K562 (cell line): ENCODE measurements at regions of chr1 and their contacts with region 1.

Region 1: DNA sequence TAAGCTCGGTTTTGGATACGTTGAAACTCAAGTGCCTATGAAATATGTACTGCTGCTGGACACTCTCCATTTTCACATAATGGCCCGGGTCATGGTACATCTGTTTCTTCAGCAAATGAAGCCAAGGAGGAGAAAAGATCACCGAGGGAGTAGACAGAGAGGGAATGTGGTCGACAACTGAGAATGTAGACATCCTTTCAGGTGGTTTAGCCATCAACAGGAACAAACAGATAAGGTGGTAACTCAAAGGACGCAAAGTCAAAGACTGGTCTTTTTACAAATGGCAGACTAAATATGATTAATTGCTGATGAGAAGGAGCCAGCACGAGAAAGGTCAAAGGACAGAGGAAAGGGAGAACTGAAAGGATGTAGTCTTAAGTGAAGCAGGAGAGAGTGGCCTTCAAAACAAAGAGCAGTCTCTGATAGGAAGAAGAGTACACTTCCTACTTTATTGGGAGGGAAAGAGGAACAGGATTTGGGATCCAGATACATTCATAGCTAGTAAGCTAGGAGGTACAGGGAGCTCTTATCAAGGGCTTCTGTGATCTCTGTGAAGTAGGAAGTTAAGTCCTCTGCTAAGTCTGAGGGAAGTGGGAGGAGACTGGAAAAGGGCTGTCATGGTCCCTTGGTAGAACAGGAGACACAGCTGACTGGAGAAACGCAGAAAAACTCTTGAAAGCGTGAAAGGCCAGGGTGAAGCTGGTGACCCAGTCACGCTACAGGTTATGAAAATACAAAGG is 28.3 kb downstream of the NUP133 start:
- DNase-seq: peak in 2 of 4 experiments; percentile 18 to 38
- ATAC-seq: peak; percentile 67
- H3K4me3 ChIP-seq: no peak overlapping the region
- H3K27ac ChIP-seq: no peak overlapping the region
- H3K4me1 ChIP-seq: peaks cover 0 to 8% of the 10 kb centered on the region in 2 experiments; a peak in 1 of 5 replicates
- H3K27me3 ChIP-seq: no peaks in the 10 kb centered on the region
- CTCF ChIP-seq: no peak
- EP300 ChIP-seq: no peak
- POLR2A ChIP-seq: no peak
- RAD21 ChIP-seq: no peak

Region 2: GRCh38 chr1:228684607-228685006 is 795.2 kb before region 1 on chr1:
- CTCF ChIA-PET with region 1: no interaction called
- POLR2A ChIA-PET with region 1: no interaction called
- in situ Hi-C with region 1: loop called (anchors 10 kb)
- intact Hi-C with region 1: no loop called
- DNase-seq: no peak
- ATAC-seq: no peak
- H3K4me3 ChIP-seq: no peak overlapping the region
- H3K27ac ChIP-seq: no peak overlapping the region
- H3K4me1 ChIP-seq: no peaks in the 10 kb centered on the region; a peak in 1 of 5 replicates
- H3K27me3 ChIP-seq: peaks cover 2 to 32% of the 10 kb centered on the region in 2 experiments; a peak in 3 of 5 replicates
- CTCF ChIP-seq: no peak
- EP300 ChIP-seq: no peak
- POLR2A ChIP-seq: no peak
- RAD21 ChIP-seq: no peak

Region 3: DNA sequence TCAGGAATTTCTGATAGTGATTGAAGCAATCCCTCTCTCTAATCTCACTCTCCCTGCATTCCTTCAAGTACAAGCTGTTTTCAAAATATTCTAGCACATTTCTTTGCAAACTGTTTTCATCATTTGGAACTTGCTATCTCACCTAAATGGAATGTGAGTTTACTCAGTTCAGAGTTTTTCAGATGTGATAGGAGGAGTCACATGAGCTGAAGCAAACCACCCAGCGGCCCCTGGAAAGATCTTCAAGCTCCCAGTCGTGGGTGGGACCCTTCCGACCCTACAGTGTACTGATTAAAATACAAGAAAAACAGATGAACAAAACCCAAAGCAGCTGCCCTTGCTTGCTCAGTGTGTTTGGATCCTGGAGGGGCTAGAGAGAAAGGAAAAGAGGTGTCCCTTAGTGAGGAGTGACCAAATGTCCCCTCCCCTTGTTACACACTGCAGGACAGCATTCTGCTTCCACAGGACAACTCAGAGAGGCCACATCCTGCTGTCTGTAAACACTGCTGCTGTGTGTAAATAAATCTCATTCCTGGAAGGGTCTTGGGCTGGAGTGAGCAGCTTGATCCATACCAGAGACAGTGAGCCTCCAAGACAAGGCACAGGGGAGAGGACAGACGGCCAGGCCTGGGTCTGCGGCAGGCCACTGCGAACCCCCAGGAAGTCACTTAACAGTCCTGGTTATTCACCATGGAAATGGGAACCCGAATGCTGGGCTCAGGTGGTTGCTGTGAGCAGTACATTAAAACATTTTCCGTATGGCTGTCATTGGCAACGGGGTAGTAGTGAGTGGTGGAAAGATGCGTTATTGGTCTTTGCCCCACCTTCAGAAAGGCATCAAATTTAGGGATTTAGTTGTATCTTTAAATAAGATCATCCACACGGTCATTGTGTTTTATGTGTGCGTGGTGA is 515.4 kb before region 1 on chr1:
- CTCF ChIA-PET with region 1: no interaction called
- POLR2A ChIA-PET with region 1: no interaction called
- in situ Hi-C with region 1: no loop called
- intact Hi-C with region 1: no loop called
- DNase-seq: peak in 1 of 4 experiments; percentile 3
- ATAC-seq: no peak
- H3K4me3 ChIP-seq: no peak overlapping the region
- H3K27ac ChIP-seq: no peak overlapping the region
- H3K4me1 ChIP-seq: no peaks in the 10 kb centered on the region
- H3K27me3 ChIP-seq: peaks cover 15 to 34% of the 10 kb centered on the region in 2 experiments; a peak in 4 of 5 replicates
- CTCF ChIP-seq: no peak
- EP300 ChIP-seq: no peak
- POLR2A ChIP-seq: no peak
- RAD21 ChIP-seq: no peak

Region 4: DNA sequence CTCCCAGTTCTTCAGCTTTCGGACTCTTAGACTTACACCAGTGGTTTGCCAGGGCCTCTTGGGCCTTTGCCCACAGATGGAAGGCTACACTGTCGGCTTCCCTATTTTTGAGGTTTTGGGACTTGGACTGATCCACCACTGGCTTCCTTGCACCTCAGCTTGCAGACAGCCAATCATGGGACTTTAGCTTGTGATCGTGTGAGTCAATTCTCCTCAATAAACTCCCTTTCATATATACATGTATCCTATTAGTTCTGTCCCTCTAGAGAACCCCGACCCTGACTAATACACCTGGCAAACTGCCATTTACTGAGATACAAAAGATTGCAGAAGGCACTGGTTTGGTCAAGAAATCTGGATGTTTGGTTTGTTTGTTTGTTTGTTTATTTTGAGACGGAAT is 215.3 kb before region 1 on chr1:
- CTCF ChIA-PET with region 1: interaction called, 50 read pairs
- POLR2A ChIA-PET with region 1: no interaction called
- in situ Hi-C with region 1: loop called (anchors 5 kb)
- intact Hi-C with region 1: no loop called
- DNase-seq: no peak
- ATAC-seq: no peak
- H3K4me3 ChIP-seq: no peak overlapping the region
- H3K27ac ChIP-seq: no peak overlapping the region
- H3K4me1 ChIP-seq: peaks cover 0 to 6% of the 10 kb centered on the region in 2 experiments; a peak in 1 of 5 replicates
- H3K27me3 ChIP-seq: no peaks in the 10 kb centered on the region; a peak in 1 of 5 replicates
- CTCF ChIP-seq: no peak
- EP300 ChIP-seq: no peak
- POLR2A ChIP-seq: no peak
- RAD21 ChIP-seq: no peak

Region 5: GRCh38 chr1:229420765-229421164 is 59.1 kb before region 1 on chr1:
- CTCF ChIA-PET with region 1: no interaction called
- POLR2A ChIA-PET with region 1: interaction called, 3 read pairs
- in situ Hi-C with region 1: no loop called
- intact Hi-C with region 1: loop called (anchors 5 kb)
- DNase-seq: peak in 3 of 4 experiments; percentile 47 to 49 (median 49)
- ATAC-seq: peak; percentile 96
- H3K4me3 ChIP-seq: no peak overlapping the region
- H3K27ac ChIP-seq: no peak overlapping the region
- H3K4me1 ChIP-seq: no peaks in the 10 kb centered on the region; a peak in 1 of 5 replicates
- H3K27me3 ChIP-seq: peaks cover 26 to 27% of the 10 kb centered on the region in 2 experiments
- CTCF ChIP-seq: peak; percentile 43 to 55 (median 52)
- EP300 ChIP-seq: no peak
- POLR2A ChIP-seq: no peak
- RAD21 ChIP-seq: peak in 1 of 2 experiments; percentile 59; a peak in 2 of 4 replicates

Region 6: GRCh38 chr1:229495782-229496181 is 16.0 kb after region 1 on chr1:
- CTCF ChIA-PET with region 1: no interaction called
- POLR2A ChIA-PET with region 1: interaction called, 10 read pairs
- in situ Hi-C with region 1: no loop called
- intact Hi-C with region 1: no loop called
- DNase-seq: no peak
- ATAC-seq: no peak
- H3K4me3 ChIP-seq: no peak overlapping the region
- H3K27ac ChIP-seq: no peak overlapping the region
- H3K4me1 ChIP-seq: no peaks in the 10 kb centered on the region
- H3K27me3 ChIP-seq: no peaks in the 10 kb centered on the region
- CTCF ChIP-seq: no peak
- EP300 ChIP-seq: no peak
- POLR2A ChIP-seq: no peak
- RAD21 ChIP-seq: no peak

Region 7: DNA sequence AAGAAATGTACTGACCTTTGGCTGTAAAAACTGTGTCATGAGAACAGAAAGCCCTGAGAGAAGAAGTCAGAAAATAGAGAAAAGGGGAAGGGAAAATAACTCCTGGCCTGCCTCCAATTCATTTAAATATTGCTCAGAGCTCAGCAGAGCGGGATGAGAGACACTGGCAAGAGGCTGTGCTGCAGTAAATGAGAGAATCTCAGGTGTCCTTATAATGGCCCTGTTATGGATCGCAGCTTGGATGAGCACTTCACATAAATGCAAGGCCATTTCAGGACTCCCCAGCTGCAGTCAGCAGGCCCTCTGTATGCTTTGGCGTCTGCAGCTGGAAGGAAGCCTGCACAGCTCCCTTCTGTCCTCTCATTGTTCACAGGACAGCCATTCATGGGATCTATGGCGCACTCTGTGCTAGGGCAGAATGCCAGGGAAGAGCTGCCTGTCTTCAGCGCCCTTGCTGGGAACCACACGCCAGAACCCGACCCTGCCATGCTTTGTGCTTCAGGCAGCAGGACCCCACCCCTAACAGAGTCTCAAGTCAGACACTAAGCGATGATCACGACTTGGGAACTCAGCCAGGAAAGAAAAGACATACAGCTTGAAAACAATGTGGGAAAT is 99.3 kb after region 1 on chr1:
- CTCF ChIA-PET with region 1: no interaction called
- POLR2A ChIA-PET with region 1: no interaction called
- in situ Hi-C with region 1: no loop called
- intact Hi-C with region 1: no loop called
- DNase-seq: no peak
- ATAC-seq: peak; percentile 67
- H3K4me3 ChIP-seq: no peak overlapping the region
- H3K27ac ChIP-seq: no peak overlapping the region
- H3K4me1 ChIP-seq: peaks cover 0 to 4% of the 10 kb centered on the region in 2 experiments; a peak in 2 of 5 replicates
- H3K27me3 ChIP-seq: peaks cover 21 to 24% of the 10 kb centered on the region in 2 experiments; a peak in 4 of 5 replicates
- CTCF ChIP-seq: no peak
- EP300 ChIP-seq: no peak
- POLR2A ChIP-seq: no peak
- RAD21 ChIP-seq: no peak